ENCODE measurements at regions of chr20 and their contacts with region 1.

Region 1: GRCh38 chr20:31951530-31952453 is at the start of gene PDRG1:
- DNase-seq: peak; percentile 93
- ATAC-seq: peak; percentile 99
- H3K4me3 ChIP-seq: peak within 1 kb of the TSS; percentile 79 to 97
- H3K27ac ChIP-seq: peak within 1 kb of the TSS; percentile 96
- H3K4me1 ChIP-seq: peaks cover 16% of the 10 kb centered on the region
- H3K27me3 ChIP-seq: no peaks in the 10 kb centered on the region
- CTCF ChIP-seq: peak; percentile 100
- total RNA-seq, gene PDRG1: 48.2 TPM

Region 2: DNA sequence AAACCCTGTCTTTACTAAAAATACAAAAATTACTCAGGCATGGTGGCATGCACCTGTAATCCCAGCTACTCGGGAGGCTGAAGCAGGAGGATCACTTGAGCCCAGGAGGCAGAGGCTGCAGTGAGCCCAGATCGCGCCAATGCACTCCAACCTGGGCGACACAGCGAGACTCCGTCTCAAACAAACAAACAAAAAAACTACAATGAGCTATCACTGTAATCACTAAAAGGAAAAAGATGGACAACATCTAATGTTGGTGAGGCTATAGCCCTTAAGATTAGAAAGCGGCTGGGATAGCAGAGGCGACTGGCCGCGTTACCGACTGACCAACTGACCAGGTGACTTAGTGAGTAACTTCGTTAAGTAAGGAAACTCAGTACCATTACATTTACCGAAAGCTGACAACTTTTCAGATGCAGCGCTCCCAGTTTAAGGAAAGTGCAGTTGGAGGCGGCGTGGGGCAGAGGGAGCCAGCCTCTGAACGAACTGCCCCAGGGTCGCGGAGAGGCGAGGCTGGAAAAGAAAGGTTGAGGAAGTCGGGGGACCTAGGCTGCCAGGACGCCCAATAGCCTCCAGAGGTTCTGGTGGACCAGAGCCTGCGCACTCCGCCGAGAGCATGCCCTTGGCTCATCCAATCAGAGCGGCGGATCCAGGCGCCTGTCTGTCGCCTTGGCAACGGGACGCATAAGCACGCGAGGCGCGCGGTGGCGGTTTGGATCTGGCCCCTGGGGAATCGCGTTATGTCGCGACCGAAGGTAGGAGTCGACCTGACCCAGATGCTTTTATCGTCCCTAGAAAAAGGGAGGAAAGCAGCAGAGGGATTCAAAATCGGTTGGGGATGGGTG is 72.4 kb before region 1 on chr20:
- CTCF ChIA-PET with region 1: interaction called, 16 read pairs
- POLR2A ChIA-PET with region 1: no interaction called
- in situ Hi-C with region 1: no loop called
- intact Hi-C with region 1: no loop called
- DNase-seq: peak; percentile 98
- ATAC-seq: peak; percentile 100
- H3K4me3 ChIP-seq: peak overlapping the region; percentile 58 to 92
- H3K27ac ChIP-seq: peak overlapping the region; percentile 92
- H3K4me1 ChIP-seq: peaks cover 4% of the 10 kb centered on the region; the same call in 1 of the 2 replicates
- H3K27me3 ChIP-seq: no peaks in the 10 kb centered on the region; the same call in 1 of the 2 replicates
- CTCF ChIP-seq: no peak

Region 3: GRCh38 chr20:31972471-31973021 is 20.8 kb after region 1 on chr20:
- CTCF ChIA-PET with region 1: no interaction called
- POLR2A ChIA-PET with region 1: no interaction called
- in situ Hi-C with region 1: no loop called
- intact Hi-C with region 1: no loop called
- DNase-seq: no peak
- ATAC-seq: peak; percentile 87
- H3K4me3 ChIP-seq: no peak overlapping the region
- H3K27ac ChIP-seq: peak overlapping the region; percentile 93
- H3K4me1 ChIP-seq: peaks cover 79% of the 10 kb centered on the region
- H3K27me3 ChIP-seq: peaks cover 3% of the 10 kb centered on the region; the same call in 1 of the 2 replicates
- CTCF ChIP-seq: no peak

Region 4: DNA sequence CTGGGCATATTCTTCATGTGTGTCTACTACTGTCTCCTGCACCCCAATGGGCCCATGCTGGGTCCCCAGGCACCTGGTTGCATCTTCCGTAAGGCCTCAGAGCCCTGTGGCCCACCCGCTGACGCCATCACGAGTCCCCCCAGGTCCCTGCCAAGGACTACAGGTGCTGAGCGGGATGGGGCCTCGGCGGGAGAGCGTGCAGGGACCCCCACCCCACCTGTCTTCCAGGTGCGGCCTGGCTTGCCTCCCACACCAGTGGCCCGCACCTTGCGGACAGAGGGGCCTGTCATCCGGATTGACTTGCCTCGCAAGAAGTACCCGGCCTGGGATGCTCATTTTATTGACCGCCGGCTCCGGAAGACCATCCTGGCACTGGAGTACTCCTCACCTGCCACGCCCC is 45.2 kb after region 1 on chr20:
- CTCF ChIA-PET with region 1: no interaction called
- POLR2A ChIA-PET with region 1: interaction called, 12 read pairs
- in situ Hi-C with region 1: no loop called
- intact Hi-C with region 1: no loop called
- DNase-seq: no peak
- ATAC-seq: no peak
- H3K4me3 ChIP-seq: no peak overlapping the region
- H3K27ac ChIP-seq: no peak overlapping the region
- H3K4me1 ChIP-seq: peaks cover 10% of the 10 kb centered on the region
- H3K27me3 ChIP-seq: no peaks in the 10 kb centered on the region
- CTCF ChIP-seq: no peak

Region 5: DNA sequence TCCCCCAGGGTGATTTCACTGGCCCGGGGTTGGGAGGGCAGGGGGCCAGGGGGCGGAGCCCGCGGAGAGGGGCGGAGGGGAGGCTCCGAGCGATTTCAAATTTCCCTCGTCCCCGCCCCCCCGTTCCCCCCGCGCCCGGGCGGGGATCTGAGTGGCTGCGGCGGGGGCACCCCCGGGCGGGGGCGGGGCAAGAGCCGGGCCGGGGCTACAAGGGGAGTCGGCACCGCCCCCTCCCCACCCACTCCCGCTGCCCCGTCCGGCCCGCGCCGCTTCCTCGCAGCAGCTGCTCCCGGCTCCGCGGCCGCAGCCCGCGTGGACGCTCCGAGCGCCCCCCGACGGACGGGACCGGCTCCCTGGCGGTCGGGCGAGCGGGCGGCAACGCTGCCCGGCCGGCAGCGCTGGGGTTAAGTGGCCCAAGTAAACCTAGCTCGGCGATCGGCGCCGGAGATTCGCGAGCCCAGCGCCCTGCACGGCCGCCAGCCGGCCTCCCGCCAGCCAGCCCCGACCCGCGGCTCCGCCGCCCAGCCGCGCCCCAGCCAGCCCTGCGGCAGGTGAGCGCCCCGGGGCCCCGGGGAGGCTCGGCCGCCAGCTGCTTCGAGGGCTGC is 810.5 kb after region 1 on chr20 and contains the start of gene DNMT3B:
- CTCF ChIA-PET with region 1: no interaction called
- POLR2A ChIA-PET with region 1: no interaction called
- in situ Hi-C with region 1: no loop called
- intact Hi-C with region 1: no loop called
- DNase-seq: no peak
- ATAC-seq: peak; percentile 92
- H3K4me3 ChIP-seq: peak within 1 kb of the TSS; percentile 71 to 83
- H3K27ac ChIP-seq: peak within 1 kb of the TSS; percentile 77
- H3K4me1 ChIP-seq: peaks cover 6% of the 10 kb centered on the region; the same call in 1 of the 2 replicates
- H3K27me3 ChIP-seq: no peaks in the 10 kb centered on the region
- CTCF ChIP-seq: no peak
- total RNA-seq, gene DNMT3B: 3.5 TPM

Measured in Panc1 (cell line).